ENCODE measurements at regions of chr11 and their contacts with region 1.

Region 1: GRCh38 chr11:57456960-57457642 is 3.2 kb upstream of the RTN4RL2 start:
- DNase-seq: peak; percentile 85
- H3K4me3 Mint-ChIP-seq: peak overlapping the region; percentile 56
- H3K27ac Mint-ChIP-seq: no peak overlapping the region
- H3K4me1 Mint-ChIP-seq: peaks cover 25% of the 10 kb centered on the region
- H3K27me3 Mint-ChIP-seq: peaks cover 27% of the 10 kb centered on the region

Region 2: GRCh38 chr11:57345555-57346211 is 111.4 kb before region 1 on chr11:
- CTCF ChIA-PET with region 1: interaction called, 26 read pairs
- intact Hi-C with region 1: loop called (anchors 1 kb)
- DNase-seq: peak; percentile 81
- H3K4me3 Mint-ChIP-seq: no peak overlapping the region
- H3K27ac Mint-ChIP-seq: no peak overlapping the region
- H3K4me1 Mint-ChIP-seq: peaks cover 3% of the 10 kb centered on the region
- H3K27me3 Mint-ChIP-seq: no peaks in the 10 kb centered on the region

Region 3: DNA sequence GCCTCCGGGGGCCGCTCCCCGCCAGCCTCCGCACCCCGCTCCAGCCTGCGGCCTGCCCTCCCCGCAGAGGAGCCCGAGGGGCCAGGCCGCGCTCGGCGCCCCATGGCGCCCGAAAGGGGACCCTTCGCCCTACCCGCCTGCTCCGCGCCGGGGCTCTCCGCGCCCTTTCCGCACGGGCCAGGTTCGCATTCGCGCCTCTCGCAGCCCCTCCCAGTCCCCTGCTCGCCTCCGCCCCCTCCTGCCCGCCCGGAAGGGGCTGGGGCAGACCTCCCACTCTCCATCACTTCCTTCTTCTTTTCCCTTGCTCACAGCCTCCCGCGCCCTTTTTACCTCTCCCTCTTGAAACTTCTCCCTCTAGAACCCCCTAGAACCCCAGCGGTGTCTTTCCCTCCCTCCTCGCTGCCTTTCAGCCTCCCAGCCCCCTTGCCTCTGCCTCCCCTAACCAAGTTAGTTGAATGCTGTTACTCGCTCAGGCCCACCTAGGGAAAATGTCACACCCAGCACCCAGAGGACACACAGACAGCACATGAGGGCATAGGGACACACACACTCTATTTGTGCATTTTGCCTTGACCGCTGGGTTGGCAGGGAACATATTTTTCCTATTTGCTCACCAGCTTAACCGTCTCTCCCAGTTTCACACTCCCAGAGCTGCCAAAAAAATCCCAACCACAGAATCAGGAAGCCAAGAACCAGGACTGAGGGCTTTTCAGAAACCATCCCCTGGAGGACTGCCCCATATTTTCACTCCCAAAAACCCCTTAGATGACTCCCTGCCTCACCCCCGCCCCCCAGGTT is 30.0 kb before region 1 on chr11 and contains the start of gene SLC43A3:
- CTCF ChIA-PET with region 1: interaction called, 27 read pairs
- intact Hi-C with region 1: loop called (anchors 1 kb)
- DNase-seq: peak; percentile 84
- H3K4me3 Mint-ChIP-seq: peak within 1 kb of the TSS; percentile 95
- H3K27ac Mint-ChIP-seq: peak within 1 kb of the TSS; percentile 96
- H3K4me1 Mint-ChIP-seq: peaks cover 33% of the 10 kb centered on the region
- H3K27me3 Mint-ChIP-seq: no peaks in the 10 kb centered on the region
- total RNA-seq, gene SLC43A3: 116 to 117 TPM

Region 4: GRCh38 chr11:57474017-57474802 is 17.1 kb after region 1 on chr11:
- CTCF ChIA-PET with region 1: interaction called, 211 read pairs
- intact Hi-C with region 1: loop called (anchors 1 kb)
- DNase-seq: peak; percentile 68
- H3K4me3 Mint-ChIP-seq: no peak overlapping the region
- H3K27ac Mint-ChIP-seq: no peak overlapping the region
- H3K4me1 Mint-ChIP-seq: peaks cover 27% of the 10 kb centered on the region
- H3K27me3 Mint-ChIP-seq: peaks cover 8% of the 10 kb centered on the region

Region 5: DNA sequence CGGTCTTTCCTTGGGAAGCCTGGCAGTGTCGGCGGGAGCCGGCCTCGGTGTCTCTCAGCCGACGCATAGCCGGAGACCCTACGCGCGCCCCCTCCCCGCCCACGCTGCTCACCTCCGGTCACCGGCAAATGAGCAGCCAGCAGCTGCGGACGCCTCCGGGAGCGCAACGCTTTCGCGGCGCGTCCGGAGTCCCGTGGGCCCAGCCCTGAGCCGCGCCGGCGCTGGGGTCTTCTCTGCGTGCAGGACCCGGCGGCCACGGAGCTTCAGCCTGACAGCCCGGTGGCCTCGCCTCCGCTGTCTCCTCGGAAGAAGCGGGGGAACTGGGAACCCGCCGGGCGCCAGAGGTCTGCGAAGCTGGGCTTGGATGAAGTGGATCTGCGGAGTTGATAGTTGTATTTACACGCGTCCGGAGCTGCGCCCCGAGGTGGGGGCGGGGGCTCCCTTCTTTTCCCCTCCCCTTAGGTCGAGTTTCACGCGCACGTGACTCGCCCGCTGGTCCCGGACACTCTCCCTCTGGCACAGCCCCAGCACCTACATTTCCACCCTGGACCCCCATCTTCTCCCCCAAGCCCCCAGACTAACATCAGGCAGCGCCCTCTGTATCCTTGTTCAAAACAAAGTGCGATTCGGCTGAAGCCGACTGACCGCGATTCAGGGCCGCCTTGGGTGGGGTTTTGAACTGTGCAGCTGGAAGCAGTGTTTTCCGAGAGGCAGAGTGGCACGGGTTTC is 58.4 kb after region 1 on chr11 and contains the start of gene SLC43A1:
- CTCF ChIA-PET with region 1: interaction called, 19 read pairs
- intact Hi-C with region 1: loop called (anchors 1 kb)
- DNase-seq: peak; percentile 46
- H3K4me3 Mint-ChIP-seq: peak within 1 kb of the TSS; percentile 98
- H3K27ac Mint-ChIP-seq: peak within 1 kb of the TSS; percentile 91
- H3K4me1 Mint-ChIP-seq: peaks cover 30% of the 10 kb centered on the region
- H3K27me3 Mint-ChIP-seq: no peaks in the 10 kb centered on the region
- total RNA-seq, gene SLC43A1: 26.5 to 29.7 TPM

Region 6: GRCh38 chr11:57541169-57541568 is 84.1 kb after region 1 on chr11:
- CTCF ChIA-PET with region 1: no interaction called
- intact Hi-C with region 1: no loop called
- DNase-seq: no peak
- H3K4me3 Mint-ChIP-seq: no peak overlapping the region
- H3K27ac Mint-ChIP-seq: no peak overlapping the region
- H3K4me1 Mint-ChIP-seq: no peaks in the 10 kb centered on the region
- H3K27me3 Mint-ChIP-seq: no peaks in the 10 kb centered on the region

Region 7: DNA sequence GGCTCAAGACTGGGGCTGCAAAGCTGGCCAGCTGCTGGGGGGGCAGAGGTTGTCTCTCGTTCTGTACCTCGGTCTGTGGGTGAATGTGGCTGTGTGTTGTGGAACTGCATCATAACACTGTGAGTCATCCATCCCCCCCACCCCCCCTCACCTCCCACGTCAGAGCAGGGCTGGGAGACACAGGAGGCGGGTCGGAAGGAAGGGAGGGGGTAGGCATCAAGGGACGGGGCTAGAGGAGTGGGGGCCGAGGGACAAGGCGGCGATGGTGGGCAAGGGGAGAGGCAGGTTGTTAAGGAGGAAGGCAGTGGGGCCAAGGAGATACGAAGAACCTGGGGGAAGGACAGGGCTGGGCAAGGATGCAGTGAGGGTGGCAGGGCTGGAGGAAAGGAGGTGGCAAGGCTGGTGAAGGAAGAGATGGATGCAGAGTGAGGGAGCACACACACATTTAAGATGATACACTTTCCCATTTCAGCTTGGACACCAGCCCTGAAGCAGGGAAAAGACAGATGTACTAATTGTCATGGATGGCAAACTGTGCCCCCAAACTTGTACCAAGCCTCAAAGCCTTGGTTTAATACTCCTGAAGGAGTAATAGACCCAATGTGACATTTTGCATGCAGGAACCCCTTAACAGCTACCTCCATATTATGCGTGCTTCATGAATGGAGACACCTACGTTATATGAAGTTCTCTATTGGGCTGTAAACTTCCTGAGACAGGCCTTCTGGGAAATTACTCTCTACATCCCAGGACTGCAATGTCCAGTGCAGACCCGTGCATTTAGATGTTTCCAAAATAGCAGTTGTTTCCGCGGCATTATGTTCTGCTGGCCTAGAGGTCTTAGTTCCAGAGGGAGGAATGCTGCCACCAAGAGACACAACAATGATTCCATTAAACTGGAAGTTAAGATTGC is 193.0 kb after region 1 on chr11 and contains the start of gene YPEL4:
- CTCF ChIA-PET with region 1: interaction called, 69 read pairs
- intact Hi-C with region 1: loop called (anchors 1 kb)
- DNase-seq: peak; percentile 70
- H3K4me3 Mint-ChIP-seq: peak within 1 kb of the TSS; percentile 75
- H3K27ac Mint-ChIP-seq: no peak within 1 kb of the TSS
- H3K4me1 Mint-ChIP-seq: peaks cover 38% of the 10 kb centered on the region
- H3K27me3 Mint-ChIP-seq: peaks cover 37% of the 10 kb centered on the region
- total RNA-seq, gene YPEL4: 0.17 to 0.54 TPM

Measured in activated naive CD4-positive, alpha-beta T cell treated with anti-CD3 and anti-CD28 coated beads for 36 hours (primary cell).